IMR-90 (cell line): ENCODE measurements at regions of chr3 and their contacts with region 1.

Region 1: DNA sequence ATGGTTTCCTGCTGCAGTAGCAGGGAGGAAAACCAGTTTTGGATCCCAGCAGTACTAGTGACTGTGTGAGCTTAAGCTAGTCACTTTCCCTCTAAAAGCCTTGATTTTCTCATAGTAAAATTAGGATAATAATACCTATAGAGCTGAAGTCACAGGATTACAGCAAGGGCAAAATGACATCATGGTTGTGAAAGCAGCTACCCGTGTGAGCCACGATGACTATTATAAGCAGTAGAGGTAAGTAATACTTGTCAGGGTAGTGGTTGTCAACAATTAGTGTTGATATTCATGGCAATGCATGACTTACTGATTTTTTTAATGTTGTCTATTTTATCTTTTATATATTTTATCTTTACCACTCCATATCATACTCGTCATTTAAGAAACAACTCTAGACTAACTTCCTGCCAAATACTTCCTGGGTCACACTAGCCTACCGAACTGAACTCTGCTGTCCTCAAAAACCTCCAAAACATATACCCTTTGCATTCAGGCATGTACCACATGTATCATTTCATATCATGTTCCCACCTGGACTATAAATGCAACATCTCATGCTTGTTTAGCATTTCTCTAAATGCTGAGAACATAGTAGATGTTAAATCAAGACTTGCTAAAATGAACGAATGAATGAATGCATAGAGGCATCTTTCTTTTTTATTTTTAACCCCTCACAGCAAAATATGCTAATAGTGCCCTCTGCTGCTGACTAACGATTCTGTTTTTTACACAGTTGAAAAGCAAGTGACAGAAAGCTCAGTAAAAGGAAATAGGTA is 172.6 kb downstream of the P3H2 start:
- DNase-seq: peak; percentile 40
- ATAC-seq: peak; percentile 73
- H3K4me3 ChIP-seq: no peak overlapping the region
- H3K27ac ChIP-seq: no peak overlapping the region
- H3K4me1 ChIP-seq: no peaks in the 10 kb centered on the region
- H3K27me3 ChIP-seq: peaks cover 13% of the 10 kb centered on the region
- CTCF ChIP-seq: peak; percentile 78
- POLR2A ChIP-seq: no peak
- RAD21 ChIP-seq: peak; percentile 87

Region 2: DNA sequence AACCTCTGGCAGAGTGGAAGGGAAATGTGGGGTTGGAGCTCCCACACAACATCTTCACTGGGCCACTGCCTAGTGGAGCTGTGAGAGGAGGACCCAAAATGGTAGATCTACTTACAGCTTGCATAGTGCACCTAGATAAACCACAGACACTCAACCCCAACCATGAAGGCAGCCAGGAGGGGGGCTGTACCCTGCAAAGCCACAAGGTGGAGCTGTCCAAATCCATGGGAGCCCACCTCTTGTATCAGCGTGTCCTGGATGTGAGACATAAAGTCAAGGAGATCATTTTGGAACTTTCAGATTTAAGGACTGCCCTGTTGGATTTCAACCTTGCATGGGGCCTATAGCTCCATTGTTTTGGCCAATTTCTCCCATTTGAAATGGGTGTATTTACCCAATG is 296.1 kb before region 1 on chr3:
- CTCF ChIA-PET with region 1: interaction called, 10 read pairs
- POLR2A ChIA-PET with region 1: no interaction called
- dilution Hi-C with region 1: no loop called
- in situ Hi-C with region 1: loop called (anchors 10 kb)
- intact Hi-C with region 1: loop called (anchors 1 kb)
- DNase-seq: peak; percentile 30
- ATAC-seq: peak; percentile 77
- H3K4me3 ChIP-seq: no peak overlapping the region
- H3K27ac ChIP-seq: no peak overlapping the region
- H3K4me1 ChIP-seq: no peaks in the 10 kb centered on the region
- H3K27me3 ChIP-seq: peaks cover 1% of the 10 kb centered on the region; the same call in 1 of the 2 replicates
- CTCF ChIP-seq: peak; percentile 58
- POLR2A ChIP-seq: no peak
- RAD21 ChIP-seq: peak; percentile 72

Region 3: GRCh38 chr3:190676481-190676880 is 728.3 kb after region 1 on chr3:
- CTCF ChIA-PET with region 1: no interaction called
- POLR2A ChIA-PET with region 1: interaction called, 19 read pairs
- dilution Hi-C with region 1: no loop called
- in situ Hi-C with region 1: no loop called
- intact Hi-C with region 1: no loop called
- DNase-seq: peak; percentile 72
- ATAC-seq: no peak
- H3K4me3 ChIP-seq: no peak overlapping the region
- H3K27ac ChIP-seq: no peak overlapping the region
- H3K4me1 ChIP-seq: peaks cover 4% of the 10 kb centered on the region; the same call in 1 of the 2 replicates
- H3K27me3 ChIP-seq: no peaks in the 10 kb centered on the region
- CTCF ChIP-seq: no peak
- POLR2A ChIP-seq: no peak
- RAD21 ChIP-seq: no peak